Panc1 (cell line): ENCODE measurements at regions of chr15 and their contacts with region 1.

Region 1: DNA sequence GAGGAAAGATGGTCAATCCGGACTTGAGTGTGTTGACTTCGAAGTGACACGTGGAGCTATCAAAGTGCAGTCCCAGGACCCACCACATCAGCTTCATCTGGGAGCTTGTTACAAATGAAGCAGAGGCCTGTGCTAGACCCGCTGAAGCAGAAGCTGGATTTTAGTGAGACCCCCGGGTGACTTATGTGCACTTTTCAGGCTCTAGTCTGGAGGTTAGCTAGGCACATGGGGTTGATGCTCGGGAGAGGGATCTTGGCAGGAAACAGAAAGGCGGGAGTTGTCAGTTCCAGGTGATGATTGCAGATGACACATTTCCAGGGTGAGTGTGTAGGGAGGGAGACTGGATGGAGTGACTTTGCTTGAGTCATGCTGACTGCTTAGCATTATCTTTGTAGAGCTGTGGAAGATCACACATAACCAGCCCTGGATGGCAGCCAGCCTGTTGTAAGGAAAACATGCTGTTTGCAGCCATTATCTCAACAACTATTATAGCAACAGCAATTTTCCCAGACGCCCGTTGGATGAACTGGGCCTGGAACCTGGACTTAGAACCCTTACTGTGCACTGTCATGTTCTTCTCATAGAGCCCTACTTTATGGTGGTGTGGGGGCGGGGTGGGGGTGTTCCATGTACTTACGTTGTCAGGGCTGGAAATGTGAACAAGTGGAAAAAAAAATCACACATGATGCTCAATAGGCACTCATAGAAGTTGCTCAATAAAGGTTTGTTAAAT is 122.4 kb downstream of the THSD4 start:
- DNase-seq: peak; percentile 95
- ATAC-seq: peak; percentile 98
- H3K4me3 ChIP-seq: no peak overlapping the region
- H3K27ac ChIP-seq: no peak overlapping the region
- H3K4me1 ChIP-seq: no peaks in the 10 kb centered on the region; the same call in 1 of the 2 replicates
- H3K27me3 ChIP-seq: no peaks in the 10 kb centered on the region
- CTCF ChIP-seq: no peak

Region 2: DNA sequence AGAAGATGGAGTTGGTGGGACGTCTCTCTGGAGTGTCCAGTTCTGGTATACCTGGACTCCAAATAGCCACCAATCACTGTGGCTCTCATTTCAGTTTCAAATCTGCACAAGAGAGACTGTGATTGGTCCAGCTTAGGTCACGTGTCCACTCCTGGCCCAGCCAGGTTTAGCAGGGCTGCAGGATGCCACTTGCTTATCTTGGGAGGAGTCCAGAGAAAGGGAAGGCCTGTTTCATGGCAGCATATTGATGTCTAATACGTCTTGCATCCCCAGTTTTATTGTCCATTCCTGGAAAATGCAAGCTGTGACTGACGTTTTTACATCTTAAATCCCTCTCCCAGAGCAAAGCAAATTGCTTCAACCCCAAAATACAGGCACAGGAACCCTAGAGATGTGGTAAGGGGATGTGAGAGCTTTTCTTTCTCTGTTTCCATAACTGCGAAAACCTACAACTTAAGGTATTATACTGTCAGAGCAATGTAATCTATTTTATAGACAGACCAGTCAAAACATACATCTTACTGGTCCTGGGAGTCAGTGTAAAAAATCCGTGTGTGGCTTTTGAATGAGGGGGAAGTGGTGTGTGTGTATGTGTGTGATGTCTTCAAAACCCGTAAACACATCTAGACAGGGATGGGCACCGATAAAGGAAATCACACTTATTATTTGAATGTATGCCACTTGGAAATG is 1414.3 kb before region 1 on chr15:
- CTCF ChIA-PET with region 1: no interaction called
- POLR2A ChIA-PET with region 1: no interaction called
- in situ Hi-C with region 1: no loop called
- intact Hi-C with region 1: no loop called
- DNase-seq: no peak
- ATAC-seq: 0 out of 2 replicates have a peak, but pooled peaks have one; percentile 49
- H3K4me3 ChIP-seq: no peak overlapping the region
- H3K27ac ChIP-seq: no peak overlapping the region
- H3K4me1 ChIP-seq: peaks cover 8% of the 10 kb centered on the region
- H3K27me3 ChIP-seq: no peaks in the 10 kb centered on the region; the same call in 1 of the 2 replicates
- CTCF ChIP-seq: no peak

Region 3: DNA sequence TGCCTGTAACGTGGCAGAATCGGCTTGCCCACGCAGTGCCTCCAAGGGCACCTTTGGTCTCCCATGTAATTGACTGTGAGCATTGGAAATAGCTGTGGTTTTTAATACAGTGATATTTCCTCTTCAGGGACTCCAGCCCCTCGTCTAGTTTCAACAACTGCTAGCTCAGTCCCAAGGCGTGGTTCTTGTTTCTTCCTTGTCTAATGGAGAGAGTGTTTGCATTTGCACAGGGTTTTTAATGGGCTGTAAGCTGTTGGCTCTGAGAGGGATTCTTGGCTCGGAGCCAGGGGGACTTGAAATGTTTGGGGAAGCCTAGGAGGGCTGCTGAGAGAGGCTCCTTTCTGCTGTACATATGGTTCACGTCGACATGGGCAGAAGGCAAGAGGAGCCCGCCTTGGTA is 36.1 kb before region 1 on chr15:
- CTCF ChIA-PET with region 1: no interaction called
- POLR2A ChIA-PET with region 1: interaction called, 11 read pairs
- in situ Hi-C with region 1: no loop called
- intact Hi-C with region 1: no loop called
- DNase-seq: no peak
- ATAC-seq: no peak
- H3K4me3 ChIP-seq: no peak overlapping the region
- H3K27ac ChIP-seq: peak overlapping the region; percentile 5; the same call in 1 of the 2 replicates
- H3K4me1 ChIP-seq: no peaks in the 10 kb centered on the region
- H3K27me3 ChIP-seq: no peaks in the 10 kb centered on the region
- CTCF ChIP-seq: no peak

Region 4: GRCh38 chr15:71225851-71226250 is 11.8 kb before region 1 on chr15:
- CTCF ChIA-PET with region 1: no interaction called
- POLR2A ChIA-PET with region 1: interaction called, 20 read pairs
- in situ Hi-C with region 1: no loop called
- intact Hi-C with region 1: no loop called
- DNase-seq: no peak
- ATAC-seq: no peak
- H3K4me3 ChIP-seq: no peak overlapping the region
- H3K27ac ChIP-seq: no peak overlapping the region
- H3K4me1 ChIP-seq: no peaks in the 10 kb centered on the region
- H3K27me3 ChIP-seq: no peaks in the 10 kb centered on the region
- CTCF ChIP-seq: no peak